Dendritic cell treated with granulocyte-macrophage colony-stimulating factor and Interleukin-4, amounts not matched to agents 40 ng/mL and 50 ng/mL, for 4 days (primary cell): ENCODE measurements at regions of chr13 and their contacts with region 1.

Region 1: GRCh38 chr13:41004875-41005693 is 14.0 kb downstream of the ELF1 start:
- H3K4me3 Mint-ChIP-seq: peak overlapping the region; percentile 27
- H3K27ac Mint-ChIP-seq: peak overlapping the region; percentile 77
- H3K4me1 Mint-ChIP-seq: peaks cover 50% of the 10 kb centered on the region
- H3K27me3 Mint-ChIP-seq: no peaks in the 10 kb centered on the region

Region 2: GRCh38 chr13:40922437-40923040 is 82.5 kb before region 1 on chr13:
- intact Hi-C with region 1: no loop called
- H3K4me3 Mint-ChIP-seq: peak overlapping the region; percentile 17
- H3K27ac Mint-ChIP-seq: peak overlapping the region; percentile 92
- H3K4me1 Mint-ChIP-seq: peaks cover 19% of the 10 kb centered on the region
- H3K27me3 Mint-ChIP-seq: no peaks in the 10 kb centered on the region

Region 3: GRCh38 chr13:40969169-40969901 is 35.7 kb before region 1 on chr13:
- intact Hi-C with region 1: loop called (anchors 5 kb)
- H3K4me3 Mint-ChIP-seq: no peak overlapping the region
- H3K27ac Mint-ChIP-seq: peak overlapping the region; percentile 70
- H3K4me1 Mint-ChIP-seq: peaks cover 65% of the 10 kb centered on the region
- H3K27me3 Mint-ChIP-seq: no peaks in the 10 kb centered on the region

Region 4: DNA sequence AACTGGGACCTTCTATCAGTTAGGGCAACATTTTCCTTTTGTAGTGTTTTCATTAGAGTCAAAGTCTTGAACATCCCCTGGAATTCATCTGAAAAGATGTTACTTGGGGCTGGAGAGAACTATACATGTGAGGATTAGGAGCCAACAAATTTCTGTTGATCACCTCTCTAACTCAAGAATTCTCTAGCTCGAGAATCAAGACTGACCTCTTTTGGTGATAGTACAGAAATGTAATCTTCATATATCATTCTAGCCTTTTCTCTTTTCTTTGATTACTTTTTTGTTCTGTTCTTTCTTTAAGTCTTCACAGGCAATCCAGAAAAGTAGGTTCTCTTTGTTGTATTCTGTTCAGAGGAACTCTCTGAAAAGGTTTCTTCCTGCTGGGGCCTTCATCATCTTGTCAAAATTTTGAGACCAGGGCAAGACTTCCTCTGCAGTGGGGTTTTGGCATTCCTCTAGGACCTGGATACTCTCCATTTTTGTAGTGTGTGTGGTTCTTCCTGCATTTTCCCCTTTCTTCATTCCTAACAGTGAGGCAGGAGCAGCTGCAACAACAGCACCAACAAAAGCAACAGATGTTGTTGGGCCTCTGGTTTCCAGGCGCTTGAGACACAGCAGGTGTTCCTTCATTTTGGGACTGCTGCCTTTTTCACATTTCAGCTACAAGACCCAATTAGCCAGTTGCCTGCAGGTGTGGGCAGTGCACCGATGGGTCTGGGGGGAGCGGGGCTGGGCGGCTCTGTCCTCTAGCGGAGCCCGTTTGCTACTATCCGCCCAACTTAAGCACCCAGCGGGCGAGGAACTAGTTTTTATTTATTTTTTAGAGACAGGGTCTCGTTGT is 12.2 kb before region 1 on chr13:
- intact Hi-C with region 1: no loop called
- H3K4me3 Mint-ChIP-seq: no peak overlapping the region
- H3K27ac Mint-ChIP-seq: peak overlapping the region; percentile 20
- H3K4me1 Mint-ChIP-seq: peaks cover 54% of the 10 kb centered on the region
- H3K27me3 Mint-ChIP-seq: no peaks in the 10 kb centered on the region

Region 5: DNA sequence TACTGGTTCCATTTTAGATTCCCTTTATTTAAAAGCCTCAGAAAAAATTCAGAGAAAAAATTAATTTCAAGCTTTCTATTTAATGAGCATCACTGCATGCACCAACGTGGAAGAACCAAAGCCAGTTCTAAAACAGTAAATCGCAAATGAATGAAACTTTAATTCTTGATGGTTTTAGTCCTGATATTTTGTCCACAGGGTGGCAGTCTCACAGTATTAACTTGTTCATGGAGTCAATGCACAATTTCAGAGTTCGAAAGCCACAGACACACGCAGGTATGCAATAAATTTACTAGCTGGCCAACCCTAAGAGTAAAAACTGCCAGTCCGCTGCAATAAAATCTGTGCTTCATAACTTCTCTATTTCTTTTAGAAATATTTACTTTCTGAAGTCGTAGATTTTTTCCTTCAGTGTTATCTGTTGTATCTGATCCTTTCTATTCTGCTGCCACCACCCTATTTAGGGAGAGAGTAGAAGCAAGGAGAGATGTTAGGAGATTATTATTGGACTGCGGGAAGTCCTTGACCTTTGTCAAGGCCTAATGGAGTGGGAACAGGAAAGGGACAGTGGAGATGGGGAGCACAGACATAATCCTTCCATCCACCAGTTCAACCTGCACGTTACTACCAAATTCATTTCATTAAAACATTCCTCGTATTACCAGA is 49.3 kb after region 1 on chr13:
- intact Hi-C with region 1: loop called (anchors 10 kb)
- H3K4me3 Mint-ChIP-seq: no peak overlapping the region
- H3K27ac Mint-ChIP-seq: no peak overlapping the region
- H3K4me1 Mint-ChIP-seq: peaks cover 81% of the 10 kb centered on the region
- H3K27me3 Mint-ChIP-seq: no peaks in the 10 kb centered on the region

Region 6: GRCh38 chr13:41148419-41149283 is 143.6 kb after region 1 on chr13:
- intact Hi-C with region 1: no loop called
- H3K4me3 Mint-ChIP-seq: no peak overlapping the region
- H3K27ac Mint-ChIP-seq: no peak overlapping the region
- H3K4me1 Mint-ChIP-seq: no peaks in the 10 kb centered on the region
- H3K27me3 Mint-ChIP-seq: no peaks in the 10 kb centered on the region